ENCODE measurements at regions of chr3 and their contacts with region 1.

Region 1: DNA sequence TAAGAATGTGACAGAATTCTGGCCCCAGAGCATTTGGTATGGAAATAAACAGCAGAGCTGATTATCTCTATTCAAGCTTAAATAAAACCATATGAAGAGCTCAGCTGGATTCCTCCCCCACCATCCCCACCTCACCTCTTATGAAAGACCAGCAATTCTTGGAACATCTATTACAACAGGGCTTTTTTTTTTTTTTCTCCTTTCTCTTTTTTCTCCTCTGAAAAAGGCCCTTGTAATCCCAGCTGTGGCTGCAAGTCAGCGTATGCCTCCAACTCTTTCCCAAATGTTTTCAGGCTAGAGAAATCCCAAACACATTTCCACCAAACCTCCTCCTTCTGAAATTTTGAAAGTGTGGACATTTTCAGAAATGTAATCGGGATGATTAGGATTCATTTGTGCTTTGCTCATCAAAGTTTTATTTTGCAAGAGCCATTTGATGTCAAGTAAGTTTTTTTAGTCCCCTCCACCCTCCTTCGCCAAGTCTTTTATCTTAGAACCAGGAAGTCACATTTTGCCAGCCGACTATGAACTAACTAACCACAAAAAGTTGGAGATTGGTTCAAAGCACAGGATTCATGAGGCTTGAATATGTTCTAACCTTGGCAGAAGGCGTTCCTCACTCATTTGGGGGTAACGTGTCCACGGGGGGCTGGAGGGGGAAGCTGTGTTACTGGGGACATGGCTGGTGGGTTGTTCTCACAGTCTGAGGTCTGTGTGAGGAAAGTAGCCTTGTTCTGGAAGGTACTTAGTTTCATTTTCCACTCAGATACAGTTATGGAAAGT is 142.0 kb upstream of the PDZRN3 start:
- DNase-seq: no peak

Region 2: DNA sequence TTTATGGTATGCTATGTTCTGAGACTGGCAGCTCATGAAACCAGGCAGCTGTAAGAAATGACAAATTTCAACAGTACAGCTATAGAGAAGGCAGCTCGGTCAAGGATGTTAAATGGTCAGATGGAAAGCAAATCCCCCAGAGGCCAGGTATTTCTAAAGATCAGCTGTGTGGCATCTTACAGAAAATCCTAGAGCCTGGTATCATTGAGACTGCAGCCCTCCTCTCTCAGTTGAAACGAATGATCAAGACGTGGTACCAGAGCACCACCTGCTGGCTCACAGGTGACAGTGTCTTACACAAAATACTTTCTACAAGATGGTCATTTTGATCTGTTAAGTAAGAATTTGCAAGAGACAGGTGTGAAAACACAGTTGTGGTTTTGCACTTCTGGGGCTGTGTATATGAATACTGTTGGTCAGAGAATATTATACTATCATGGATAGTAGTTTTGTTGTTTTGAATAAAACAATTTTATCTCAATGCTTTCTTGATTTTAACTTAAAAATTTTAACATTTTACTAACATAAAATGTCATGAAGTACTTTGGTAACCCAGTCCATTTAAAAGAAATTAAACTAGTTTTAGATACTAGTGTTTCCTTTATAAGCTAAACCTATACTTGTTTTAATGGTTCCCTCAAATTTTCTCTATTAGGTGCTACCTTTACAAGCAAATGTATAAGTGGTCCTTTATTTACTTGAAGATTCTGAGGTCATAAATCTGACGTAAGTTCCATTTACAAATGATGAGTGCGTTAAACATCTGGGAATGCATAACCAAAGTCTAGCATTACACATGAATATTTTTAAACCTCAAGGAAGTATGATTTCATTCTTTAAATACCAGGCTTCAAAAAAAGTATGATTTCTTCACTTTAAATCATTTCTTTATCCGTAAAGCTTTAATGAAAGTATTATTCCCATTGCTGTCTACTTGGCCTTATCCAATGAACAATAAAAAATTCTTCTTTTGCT is 263.9 kb before region 1 on chr3:
- in situ Hi-C with region 1: loop called (anchors 25 kb)
- DNase-seq: peak; percentile 79

Region 3: GRCh38 chr3:74273091-74273490 is 506.3 kb after region 1 on chr3:
- in situ Hi-C with region 1: no loop called
- DNase-seq: no peak

Measured in SK-MEL-5 (cell line).